ENCODE measurements at regions of chr6 and their contacts with region 1.

Region 1: DNA sequence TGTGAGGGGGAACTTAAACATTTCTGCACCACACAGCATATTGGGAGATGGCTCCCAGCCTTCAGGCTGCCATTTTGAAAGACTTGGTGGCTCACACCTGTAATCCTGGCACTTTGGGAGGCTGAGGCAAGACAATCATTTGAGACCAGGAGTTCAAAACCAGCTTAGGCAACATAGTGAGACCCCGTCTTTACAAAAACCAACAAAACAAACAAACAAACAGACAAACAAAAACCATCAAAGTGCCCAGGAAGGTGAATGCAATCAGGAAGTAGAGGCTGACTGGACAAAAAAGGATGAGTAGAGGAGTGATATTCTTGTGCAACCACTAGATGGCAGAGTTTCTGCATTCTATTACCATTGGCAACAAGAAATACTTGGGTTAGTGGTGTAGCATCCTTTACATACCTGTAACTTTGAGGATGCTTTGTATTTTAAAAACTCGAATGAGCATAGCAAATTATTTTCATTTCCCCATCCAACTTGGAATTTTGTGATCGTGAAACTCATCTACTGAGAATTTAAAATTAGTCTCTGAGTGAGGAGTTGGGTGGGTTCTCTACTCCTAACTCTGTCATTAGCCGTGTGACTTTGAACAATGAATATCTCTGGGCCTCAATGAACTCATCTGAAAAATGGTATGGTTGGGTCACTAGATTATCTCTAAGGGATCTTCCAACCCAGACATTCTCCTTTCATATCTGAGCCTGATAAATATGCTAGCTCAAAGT is 84.4 kb downstream of the CRYBG1 start:
- DNase-seq: no peak
- ATAC-seq: peak; percentile 82

Region 2: DNA sequence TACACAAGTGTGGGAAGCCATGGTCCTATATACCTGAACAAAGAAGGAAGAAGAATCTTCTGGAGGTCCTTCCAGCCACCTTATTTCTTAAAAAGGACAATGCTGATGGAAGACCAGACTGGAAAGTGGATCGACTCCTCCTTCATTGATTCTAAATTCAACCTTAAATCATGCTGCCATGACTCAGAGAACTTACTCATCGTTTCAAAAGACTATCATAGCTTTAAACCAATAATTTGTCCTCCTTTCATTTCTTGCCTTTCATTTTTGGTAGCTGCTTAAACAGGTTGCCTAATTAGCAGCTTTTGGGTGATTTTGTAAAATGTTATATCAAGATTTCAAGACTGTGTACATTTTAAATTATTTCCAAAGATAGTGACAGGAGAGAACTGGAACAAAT is 123.6 kb after region 1 on chr6:
- intact Hi-C with region 1: loop called (anchors 5 kb)
- DNase-seq: no peak
- ATAC-seq: no peak

Region 3: GRCh38 chr6:106979427-106979884 is 534.5 kb after region 1 on chr6:
- intact Hi-C with region 1: loop called (anchors 5 kb)
- DNase-seq: peak; percentile 89
- ATAC-seq: peak; percentile 91

Measured in Right ventricle myocardium superior (tissue), 1 donor.